Tibial artery (tissue), 4 donors: ENCODE measurements at regions of chr19 and their contacts with region 1.

Region 1: DNA sequence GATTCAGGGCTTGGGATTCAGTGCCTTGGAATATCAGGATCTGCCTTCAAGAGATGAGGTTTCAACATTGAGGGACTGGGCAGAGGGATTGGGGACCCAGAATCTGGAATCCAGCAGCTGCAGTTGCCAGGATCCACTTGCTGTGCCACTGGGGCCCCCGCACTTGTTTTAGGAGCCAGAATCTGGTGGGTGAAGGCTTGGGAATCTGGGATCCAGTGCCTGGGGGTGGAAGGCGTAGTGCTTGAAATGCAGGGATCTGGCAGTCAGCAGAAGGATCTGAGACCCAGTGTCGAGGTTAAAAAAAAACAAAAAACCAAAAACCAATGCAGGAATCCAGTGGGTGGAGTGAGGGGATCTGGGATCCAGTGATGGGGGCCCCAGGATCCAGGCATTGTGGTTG is 7.3 kb upstream of the SLC25A41 start:
- DNase-seq: no peak
- H3K4me3 ChIP-seq: no peak overlapping the region
- H3K27ac ChIP-seq: no peak overlapping the region
- H3K4me1 ChIP-seq: no peaks in the 10 kb centered on the region
- H3K27me3 ChIP-seq: no peaks in the 10 kb centered on the region
- CTCF ChIP-seq: no peak

Region 2: GRCh38 chr19:6412447-6413091 is 28.3 kb before region 1 on chr19:
- intact Hi-C with region 1: loop called (anchors 2 kb)
- DNase-seq: no peak
- H3K4me3 ChIP-seq: no peak overlapping the region
- H3K27ac ChIP-seq: no peak overlapping the region
- H3K4me1 ChIP-seq: no peaks in the 10 kb centered on the region
- H3K27me3 ChIP-seq: no peaks in the 10 kb centered on the region
- CTCF ChIP-seq: peak in 1 of 2 experiments; percentile 37

Region 3: DNA sequence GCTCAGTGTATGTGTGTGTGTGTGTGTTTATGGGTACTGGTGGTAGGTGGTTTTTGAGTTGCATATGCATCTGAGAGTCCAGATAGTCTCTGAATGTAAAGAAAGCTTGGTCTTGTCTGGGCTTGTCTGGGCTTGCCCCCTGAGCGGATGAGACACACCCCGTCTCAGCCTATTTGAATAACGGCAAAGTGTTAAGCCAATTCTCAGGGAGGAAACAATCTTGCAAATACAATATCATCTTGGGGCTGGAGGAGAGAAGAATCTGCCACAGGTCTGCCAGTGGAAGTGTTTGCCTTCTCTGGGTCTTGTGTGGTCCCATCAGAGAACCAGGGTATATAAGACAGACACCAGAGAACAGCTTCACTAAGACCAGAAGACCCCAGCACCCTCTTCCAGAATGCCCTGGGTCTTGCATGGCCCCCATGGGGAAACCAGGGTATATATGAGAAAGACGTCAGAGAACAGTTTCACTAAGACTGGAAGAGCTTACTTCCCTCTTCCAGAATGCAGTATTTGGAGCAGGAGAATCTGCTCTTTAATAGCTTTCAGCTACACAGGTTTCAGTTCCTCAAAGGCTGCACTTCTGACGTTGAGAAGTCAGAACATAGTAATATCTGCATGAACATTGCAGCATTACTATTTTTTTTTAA is 136.7 kb after region 1 on chr19:
- intact Hi-C with region 1: no loop called
- DNase-seq: no peak
- H3K4me3 ChIP-seq: no peak overlapping the region
- H3K27ac ChIP-seq: no peak overlapping the region
- H3K4me1 ChIP-seq: no peaks in the 10 kb centered on the region
- H3K27me3 ChIP-seq: peaks cover 0 to 3% of the 10 kb centered on the region in 2 donors
- CTCF ChIP-seq: no peak